Right ventricle myocardium inferior (tissue), 1 donor: ENCODE measurements at regions of chr6 and their contacts with region 1.

Region 1: GRCh38 chr6:41367700-41368099 is 32.3 kb downstream of the NCR2 start:
- DNase-seq: no peak
- ATAC-seq: peak; percentile 80

Region 2: GRCh38 chr6:41315943-41316620 is 51.6 kb before region 1 on chr6:
- intact Hi-C with region 1: no loop called
- DNase-seq: no peak
- ATAC-seq: no peak

Region 3: DNA sequence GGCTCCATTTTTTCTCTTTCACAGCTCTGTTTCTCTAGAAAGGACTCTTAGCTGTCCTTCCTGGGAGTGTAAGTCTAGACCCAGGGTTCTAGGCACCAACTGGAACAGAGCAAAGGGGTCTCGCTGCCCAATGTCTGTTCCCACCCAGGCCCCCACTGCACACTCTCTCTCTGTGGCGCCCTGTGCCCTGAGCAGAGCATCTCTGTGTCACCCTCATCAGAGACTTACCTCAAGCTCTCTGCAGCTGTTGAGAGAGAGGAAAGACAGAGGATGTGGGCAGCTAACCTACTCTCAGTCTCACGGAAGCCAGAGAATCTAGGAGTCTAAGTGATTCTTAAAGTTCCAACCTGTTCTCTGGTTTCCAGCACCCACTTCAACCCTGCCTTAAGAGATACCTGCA is 22.8 kb before region 1 on chr6:
- intact Hi-C with region 1: no loop called
- DNase-seq: no peak
- ATAC-seq: no peak

Region 4: DNA sequence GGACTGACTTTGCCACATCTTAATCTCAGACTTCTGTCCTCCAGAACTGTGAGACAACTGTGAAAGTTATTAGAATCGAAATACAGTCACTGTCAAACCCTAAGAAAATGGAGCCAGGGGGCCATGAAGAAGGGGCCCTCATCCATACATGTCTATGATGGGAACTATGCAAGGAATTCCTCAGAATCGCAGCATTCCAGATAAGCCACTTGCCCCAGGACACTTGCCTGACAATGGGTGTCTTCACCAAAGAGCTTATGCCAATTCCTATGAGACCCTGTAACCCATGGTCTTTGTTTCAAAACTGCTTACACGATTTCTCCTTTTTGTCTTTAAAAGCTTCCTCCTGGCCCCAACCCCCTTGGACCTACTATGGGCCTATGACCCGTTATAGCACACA is 88.1 kb after region 1 on chr6:
- intact Hi-C with region 1: loop called (anchors 2 kb)
- DNase-seq: no peak
- ATAC-seq: no peak

Region 5: DNA sequence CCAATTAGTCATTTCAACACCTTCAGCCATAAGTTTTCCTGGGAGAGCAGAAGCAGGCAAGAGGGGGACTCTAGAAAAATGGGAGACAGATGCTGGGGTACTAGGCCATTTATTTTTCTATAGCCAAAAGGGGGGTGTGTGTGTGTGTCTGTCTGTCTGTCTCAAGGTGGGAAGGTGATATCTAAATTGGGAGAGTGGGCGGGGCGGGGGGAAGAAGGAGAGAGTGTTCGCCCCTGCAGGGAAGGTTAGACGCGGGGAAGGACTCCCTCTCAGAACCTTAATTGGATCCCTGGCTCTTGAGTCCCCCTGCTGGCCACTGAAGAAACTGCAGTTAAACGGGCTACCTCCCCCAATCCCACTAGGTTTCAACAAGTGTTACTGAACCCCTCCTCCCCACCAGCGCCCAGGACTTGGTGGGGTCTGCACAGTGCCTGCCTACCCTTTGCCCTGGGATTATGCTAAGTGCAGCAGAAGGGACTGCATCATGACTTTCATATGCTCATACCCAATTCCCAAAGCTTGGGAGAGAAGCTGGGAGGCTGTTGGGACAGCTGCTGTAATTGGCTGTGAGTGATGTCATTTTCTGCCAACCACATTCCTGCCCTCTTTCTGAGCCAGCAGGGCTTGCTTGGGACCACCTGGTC is 224.3 kb after region 1 on chr6:
- intact Hi-C with region 1: loop called (anchors 2 kb)
- DNase-seq: peak; percentile 78
- ATAC-seq: peak; percentile 55

Region 6: DNA sequence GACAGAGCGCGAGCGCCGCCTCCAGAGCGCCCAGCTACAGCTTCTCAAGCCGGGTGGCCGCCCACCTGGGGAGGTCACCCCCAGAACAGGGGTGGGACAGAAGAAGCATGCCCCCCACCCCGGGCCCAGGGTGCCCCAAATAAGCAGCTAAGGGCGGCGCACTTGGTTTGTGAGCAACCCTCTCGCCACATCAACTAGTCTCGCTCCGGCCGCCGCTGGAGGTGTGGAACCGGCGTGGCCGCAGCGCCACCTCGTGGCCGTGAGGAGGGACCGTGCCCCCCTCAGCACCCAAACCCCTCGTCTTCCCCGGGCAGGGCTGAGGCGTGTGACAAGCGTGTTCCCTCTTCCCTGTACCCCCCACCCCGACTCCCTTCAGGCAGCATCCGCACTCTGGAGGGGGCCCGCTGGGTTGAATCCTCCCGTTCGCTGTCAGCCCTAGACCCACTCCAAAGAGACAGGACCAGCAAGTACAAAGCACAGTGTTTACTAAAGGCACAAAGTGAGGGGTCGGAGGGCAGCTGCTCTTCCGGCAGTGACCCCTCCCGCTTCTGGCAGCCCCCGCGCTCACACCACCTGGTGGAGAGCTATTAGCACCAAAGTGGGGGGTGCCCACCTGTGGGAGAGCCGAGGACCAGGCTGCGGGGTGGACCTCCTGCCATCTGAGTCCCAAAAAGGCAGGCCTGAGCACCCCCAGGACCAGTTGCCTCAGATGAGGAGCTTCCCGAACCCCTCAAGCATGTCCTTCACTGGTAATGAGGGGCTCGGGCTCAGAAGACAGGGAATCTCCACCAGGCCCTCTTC is 316.0 kb after region 1 on chr6:
- intact Hi-C with region 1: loop called (anchors 1 kb)
- DNase-seq: peak; percentile 93
- ATAC-seq: peak; percentile 82